A673 (cell line): ENCODE measurements at regions of chr3 and their contacts with region 1.

Region 1: DNA sequence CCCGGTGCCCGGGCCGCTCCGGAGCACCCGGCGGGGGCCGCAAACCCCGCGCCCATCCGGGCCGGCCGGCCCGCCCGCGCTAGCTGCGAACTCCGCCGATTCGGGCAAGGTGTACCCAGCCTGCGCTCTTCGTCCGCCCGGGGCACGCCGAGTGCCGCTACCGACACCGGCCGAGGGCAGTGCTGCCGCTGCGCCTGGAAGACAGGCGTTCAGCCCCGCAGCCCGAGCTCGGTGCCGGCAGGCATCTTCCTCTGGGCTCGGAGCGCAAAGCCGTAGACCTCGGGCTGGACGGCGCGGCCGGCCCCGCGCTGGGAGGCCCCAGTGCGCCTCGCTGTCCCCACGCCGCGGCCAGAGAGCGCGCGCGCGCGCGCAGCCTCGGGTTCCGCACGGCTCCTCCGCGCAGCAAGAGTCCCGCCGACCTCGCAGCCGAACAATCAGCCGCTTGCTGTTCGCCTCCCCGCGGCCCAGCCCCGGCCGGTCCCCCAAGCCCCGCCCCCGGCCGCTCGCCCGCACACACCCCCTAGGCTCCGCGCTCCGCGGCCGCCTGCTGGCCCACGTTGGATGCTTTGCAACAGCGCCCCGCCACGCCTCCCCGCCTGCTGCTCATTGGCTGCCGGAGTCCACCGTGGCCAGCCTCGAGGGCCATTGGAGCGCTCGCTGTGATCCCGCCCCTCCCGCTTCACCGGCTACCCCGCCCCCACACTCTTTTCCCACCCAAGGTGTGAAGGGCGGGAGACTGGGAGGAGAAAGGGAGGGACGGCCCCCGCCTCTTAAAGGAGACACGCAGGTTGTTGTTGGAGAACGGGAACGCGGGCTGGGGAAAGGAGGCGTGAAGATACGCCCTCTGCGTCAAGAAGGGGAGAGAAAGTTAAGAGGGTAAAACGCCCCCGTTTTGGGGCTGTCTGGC is at the start of gene LRIG1:
- DNase-seq: peak; percentile 96
- H3K4me3 ChIP-seq: peak within 1 kb of the TSS; percentile 75
- H3K27ac ChIP-seq: peak within 1 kb of the TSS; percentile 83
- H3K4me1 ChIP-seq: peaks cover 18% of the 10 kb centered on the region
- H3K27me3 ChIP-seq: no peaks in the 10 kb centered on the region
- CTCF ChIP-seq: no peak
- total RNA-seq, gene LRIG1: 24.1 and 24.9 TPM in 2 replicates

Region 2: GRCh38 chr3:66407611-66408218 is 93.1 kb before region 1 on chr3:
- CTCF ChIA-PET with region 1: no interaction called
- POLR2A ChIA-PET with region 1: no interaction called
- intact Hi-C with region 1: loop called (anchors 10 kb)
- DNase-seq: peak; percentile 62
- H3K4me3 ChIP-seq: no peak overlapping the region
- H3K27ac ChIP-seq: no peak overlapping the region
- H3K4me1 ChIP-seq: no peaks in the 10 kb centered on the region
- H3K27me3 ChIP-seq: no peaks in the 10 kb centered on the region
- CTCF ChIP-seq: peak; percentile 75

Region 3: DNA sequence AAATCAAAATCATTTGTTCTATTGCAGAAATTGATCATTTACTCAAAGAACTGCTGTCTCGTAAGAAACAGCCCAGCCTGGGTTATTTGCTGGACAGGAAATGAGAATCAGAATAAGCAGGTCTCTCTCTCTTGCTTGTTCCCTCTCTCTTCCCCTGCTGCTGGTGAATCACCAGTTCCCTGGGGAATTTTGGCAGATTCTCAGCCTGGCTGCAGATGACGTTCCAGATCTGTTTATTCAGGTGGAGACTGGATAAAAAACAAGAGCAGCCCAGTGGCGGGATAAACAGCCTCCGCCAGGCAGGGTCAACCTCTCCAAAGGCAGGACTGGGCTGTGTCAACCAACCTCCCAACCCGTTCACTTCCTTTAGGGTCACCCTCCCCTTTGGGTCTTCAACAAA is 72.1 kb before region 1 on chr3:
- CTCF ChIA-PET with region 1: no interaction called
- POLR2A ChIA-PET with region 1: no interaction called
- intact Hi-C with region 1: loop called (anchors 5 kb)
- DNase-seq: peak; percentile 89
- H3K4me3 ChIP-seq: no peak overlapping the region
- H3K27ac ChIP-seq: peak overlapping the region; percentile 68
- H3K4me1 ChIP-seq: peaks cover 18% of the 10 kb centered on the region
- H3K27me3 ChIP-seq: no peaks in the 10 kb centered on the region
- CTCF ChIP-seq: no peak